ENCODE measurements at regions of chr10 and their contacts with region 1.

Region 1: DNA sequence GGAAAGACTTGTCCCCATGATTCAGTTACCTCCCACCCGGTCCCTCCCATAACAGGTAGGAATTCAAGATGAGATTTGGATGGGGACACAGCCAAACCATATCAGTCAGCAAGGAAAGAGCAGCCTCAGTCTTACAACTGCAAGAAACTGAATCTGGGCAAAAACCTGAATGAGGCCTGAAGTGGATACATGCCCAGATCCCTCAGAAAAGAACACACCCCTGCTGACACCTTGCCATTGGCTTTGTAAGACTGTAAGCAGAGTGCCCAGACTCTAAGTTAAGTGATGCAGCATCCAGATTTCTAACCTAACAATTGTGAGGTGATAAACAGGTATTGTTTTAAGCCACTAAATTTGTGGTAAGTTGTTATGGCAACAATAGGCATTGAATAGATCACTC is 670.8 kb downstream of the SORCS1 start:
- DNase-seq: no peak
- ATAC-seq: no peak
- H3K4me3 ChIP-seq: no peak overlapping the region
- H3K27ac ChIP-seq: no peak overlapping the region
- H3K4me1 ChIP-seq: no peaks in the 10 kb centered on the region
- H3K27me3 ChIP-seq: no peaks in the 10 kb centered on the region
- CTCF ChIP-seq: no peak
- POLR2A ChIP-seq: no peak

Region 2: GRCh38 chr10:106301146-106301545 is 192.6 kb before region 1 on chr10:
- intact Hi-C with region 1: no loop called
- DNase-seq: no peak
- ATAC-seq: no peak
- H3K4me3 ChIP-seq: no peak overlapping the region
- H3K27ac ChIP-seq: no peak overlapping the region
- H3K4me1 ChIP-seq: no peaks in the 10 kb centered on the region
- H3K27me3 ChIP-seq: no peaks in the 10 kb centered on the region
- CTCF ChIP-seq: no peak
- POLR2A ChIP-seq: no peak

Region 3: GRCh38 chr10:106436123-106436740 is 57.5 kb before region 1 on chr10:
- intact Hi-C with region 1: loop called in 1 of 10 experiments (anchors 10 kb)
- DNase-seq: no peak
- ATAC-seq: no peak
- H3K4me3 ChIP-seq: no peak overlapping the region
- H3K27ac ChIP-seq: no peak overlapping the region
- H3K4me1 ChIP-seq: no peaks in the 10 kb centered on the region
- H3K27me3 ChIP-seq: no peaks in the 10 kb centered on the region
- CTCF ChIP-seq: no peak
- POLR2A ChIP-seq: no peak